ENCODE measurements at regions of chr1 and their contacts with region 1.

Region 1: DNA sequence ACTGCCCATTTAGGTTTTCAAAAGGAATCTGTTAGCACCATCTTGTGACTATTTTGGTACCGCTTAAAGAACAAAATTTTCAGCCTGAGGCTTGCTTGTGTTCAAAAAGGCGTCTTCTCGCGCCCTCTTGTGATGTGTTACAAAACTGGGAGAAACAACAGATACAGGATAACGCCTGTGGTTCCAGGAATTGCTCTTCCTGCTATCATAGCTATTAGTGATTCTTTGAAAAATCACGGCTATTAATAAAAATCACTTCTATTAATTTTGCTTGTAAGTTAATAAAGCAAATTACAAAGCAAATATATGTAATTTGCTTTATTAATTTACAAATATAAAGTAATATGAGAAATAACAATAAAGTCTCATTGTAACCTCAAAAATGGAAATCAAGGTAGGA is 82.2 kb upstream of the ABCD3 start:
- DNase-seq: peak; percentile 91
- H3K4me3 ChIP-seq: no peak overlapping the region
- H3K27ac ChIP-seq: no peak overlapping the region
- H3K4me1 ChIP-seq: no peaks in the 10 kb centered on the region
- H3K27me3 ChIP-seq: no peaks in the 10 kb centered on the region
- CTCF ChIP-seq: peak; percentile 96

Region 2: DNA sequence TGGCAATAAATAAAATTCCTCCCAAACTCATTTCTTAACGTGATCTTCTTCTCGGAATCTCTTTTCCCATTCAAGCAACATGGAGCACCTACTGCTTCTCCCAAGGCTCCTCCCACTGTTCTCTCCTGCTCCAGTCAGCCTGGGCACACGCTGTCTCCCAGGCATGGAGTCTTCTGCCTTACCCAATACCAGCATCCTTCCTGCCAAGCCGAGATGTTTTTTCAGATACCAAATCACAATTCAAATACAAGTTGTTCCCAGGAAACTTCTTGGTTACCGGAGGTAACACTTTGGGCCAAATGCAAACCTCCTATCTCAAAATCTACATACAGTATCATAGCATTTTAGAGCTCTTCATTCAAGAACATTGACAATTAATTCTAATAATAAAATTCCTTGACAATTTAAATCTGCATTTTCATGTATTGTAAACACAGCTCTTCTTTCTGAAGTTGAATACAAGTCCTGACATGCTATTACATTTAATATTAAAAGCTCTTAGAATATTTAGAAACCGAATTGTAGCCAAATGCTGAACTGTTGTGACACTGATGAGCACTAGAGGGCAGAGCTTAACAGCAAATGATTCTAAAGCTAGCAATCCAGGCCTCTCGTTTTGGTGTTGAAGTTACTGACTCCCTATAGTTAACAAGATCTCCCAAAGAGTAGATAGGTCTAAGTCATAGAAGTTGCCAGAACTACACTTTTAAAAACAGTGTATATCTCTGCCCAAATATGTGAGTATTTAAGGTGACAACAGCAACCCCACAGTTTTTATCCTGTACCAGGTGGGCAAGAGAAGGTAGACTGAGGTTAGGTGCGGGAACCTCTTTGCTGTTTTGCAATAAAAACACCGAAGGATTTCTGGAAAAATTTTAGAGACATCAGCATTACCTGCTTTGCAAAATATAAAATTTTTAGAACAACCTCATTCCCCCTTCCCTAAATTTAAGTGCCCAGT is 706.6 kb before region 1 on chr1:
- CTCF ChIA-PET with region 1: interaction called, 7 read pairs
- POLR2A ChIA-PET with region 1: no interaction called
- intact Hi-C with region 1: loop called (anchors 10 kb)
- DNase-seq: peak; percentile 76
- H3K4me3 ChIP-seq: no peak overlapping the region
- H3K27ac ChIP-seq: no peak overlapping the region
- H3K4me1 ChIP-seq: no peaks in the 10 kb centered on the region
- H3K27me3 ChIP-seq: no peaks in the 10 kb centered on the region
- CTCF ChIP-seq: peak; percentile 88

Region 3: DNA sequence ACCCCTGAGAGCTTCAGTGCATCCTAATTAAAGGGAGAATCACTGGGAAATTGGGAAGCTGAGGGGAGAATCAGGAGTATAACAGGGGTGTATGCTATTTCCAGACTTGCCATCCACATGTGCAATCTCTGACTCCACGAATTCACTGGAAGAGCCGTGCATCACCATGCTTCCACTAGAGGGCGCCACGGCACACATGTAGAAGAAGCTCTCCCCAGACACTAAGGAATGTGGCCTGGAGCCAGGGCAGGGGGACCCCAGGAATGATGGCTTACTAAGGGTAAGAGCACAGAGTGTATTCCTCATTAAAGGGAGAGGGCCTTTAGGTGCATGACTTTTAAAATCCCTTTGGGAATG is 296.5 kb before region 1 on chr1:
- CTCF ChIA-PET with region 1: interaction called, 74 read pairs
- POLR2A ChIA-PET with region 1: no interaction called
- intact Hi-C with region 1: no loop called
- DNase-seq: peak; percentile 84
- H3K4me3 ChIP-seq: no peak overlapping the region
- H3K27ac ChIP-seq: no peak overlapping the region
- H3K4me1 ChIP-seq: no peaks in the 10 kb centered on the region
- H3K27me3 ChIP-seq: no peaks in the 10 kb centered on the region
- CTCF ChIP-seq: peak; percentile 97

Region 4: DNA sequence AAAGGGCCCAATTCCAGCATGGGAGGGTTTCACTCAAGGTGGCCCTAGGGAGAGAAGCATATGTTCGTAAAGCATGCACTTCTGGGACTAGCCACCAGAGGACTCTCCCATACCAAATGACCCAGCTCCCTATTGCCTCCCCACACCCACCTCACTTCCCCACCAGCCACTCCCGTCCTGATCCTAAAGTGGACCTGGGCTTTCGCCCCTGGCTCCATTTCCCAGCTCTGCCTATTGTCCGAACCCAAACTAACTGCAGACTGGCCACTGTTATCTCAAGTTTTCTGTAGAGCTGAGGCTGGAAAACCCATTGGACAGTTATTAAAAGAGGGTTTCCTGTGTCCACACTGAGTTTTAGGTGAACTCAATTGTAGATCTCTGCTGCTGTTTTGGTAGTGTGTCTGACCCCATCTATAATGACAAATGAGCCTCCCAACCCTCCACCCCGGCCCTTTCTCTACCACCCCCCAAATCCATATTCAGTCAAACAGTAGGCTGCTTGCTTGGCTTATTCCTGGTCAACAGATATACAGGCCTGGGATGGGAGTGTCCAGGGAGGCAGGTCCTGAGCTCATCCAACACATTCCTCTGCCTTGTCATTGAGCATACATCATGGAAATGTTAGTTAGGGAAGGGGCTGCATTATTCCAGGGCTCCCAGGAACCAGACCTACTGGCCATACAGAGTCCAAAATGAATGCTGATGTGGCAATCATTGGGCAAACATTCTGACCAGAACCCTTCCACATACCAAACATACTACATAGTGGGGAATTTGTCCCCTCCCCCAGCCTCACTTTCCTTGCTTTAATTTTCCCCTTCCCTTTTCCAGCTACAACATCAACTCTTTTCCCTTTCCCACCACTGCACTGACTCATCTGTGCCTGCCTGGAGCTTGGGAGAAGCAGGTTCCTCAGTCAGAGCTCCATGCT is 274.2 kb before region 1 on chr1:
- CTCF ChIA-PET with region 1: interaction called, 54 read pairs
- POLR2A ChIA-PET with region 1: no interaction called
- intact Hi-C with region 1: loop called (anchors 2 kb)
- DNase-seq: peak; percentile 78
- H3K4me3 ChIP-seq: no peak overlapping the region
- H3K27ac ChIP-seq: no peak overlapping the region
- H3K4me1 ChIP-seq: no peaks in the 10 kb centered on the region
- H3K27me3 ChIP-seq: no peaks in the 10 kb centered on the region
- CTCF ChIP-seq: peak; percentile 85

Region 5: DNA sequence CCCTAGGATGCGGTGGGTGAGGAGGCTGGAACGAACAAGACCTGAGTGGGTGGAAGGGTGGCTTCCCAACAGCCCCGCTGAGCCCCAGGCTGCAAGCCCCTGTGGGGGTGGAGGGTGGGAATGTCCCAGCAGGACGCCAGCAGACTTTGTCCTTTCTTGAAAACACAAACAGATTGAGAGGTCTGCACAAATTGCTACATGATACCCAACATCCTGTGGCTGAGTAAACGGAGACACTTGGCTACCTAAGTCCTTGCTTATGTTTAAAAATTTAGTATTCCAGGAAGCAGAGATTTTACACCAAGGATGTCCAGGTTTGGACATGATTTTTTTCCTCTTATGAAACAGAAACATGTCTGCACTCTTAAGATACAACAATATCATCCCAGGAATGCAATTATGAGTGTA is 217.4 kb after region 1 on chr1:
- CTCF ChIA-PET with region 1: no interaction called
- POLR2A ChIA-PET with region 1: no interaction called
- intact Hi-C with region 1: no loop called
- DNase-seq: no peak
- H3K4me3 ChIP-seq: no peak overlapping the region
- H3K27ac ChIP-seq: no peak overlapping the region
- H3K4me1 ChIP-seq: peaks cover 4% of the 10 kb centered on the region
- H3K27me3 ChIP-seq: no peaks in the 10 kb centered on the region
- CTCF ChIP-seq: no peak

Region 6: DNA sequence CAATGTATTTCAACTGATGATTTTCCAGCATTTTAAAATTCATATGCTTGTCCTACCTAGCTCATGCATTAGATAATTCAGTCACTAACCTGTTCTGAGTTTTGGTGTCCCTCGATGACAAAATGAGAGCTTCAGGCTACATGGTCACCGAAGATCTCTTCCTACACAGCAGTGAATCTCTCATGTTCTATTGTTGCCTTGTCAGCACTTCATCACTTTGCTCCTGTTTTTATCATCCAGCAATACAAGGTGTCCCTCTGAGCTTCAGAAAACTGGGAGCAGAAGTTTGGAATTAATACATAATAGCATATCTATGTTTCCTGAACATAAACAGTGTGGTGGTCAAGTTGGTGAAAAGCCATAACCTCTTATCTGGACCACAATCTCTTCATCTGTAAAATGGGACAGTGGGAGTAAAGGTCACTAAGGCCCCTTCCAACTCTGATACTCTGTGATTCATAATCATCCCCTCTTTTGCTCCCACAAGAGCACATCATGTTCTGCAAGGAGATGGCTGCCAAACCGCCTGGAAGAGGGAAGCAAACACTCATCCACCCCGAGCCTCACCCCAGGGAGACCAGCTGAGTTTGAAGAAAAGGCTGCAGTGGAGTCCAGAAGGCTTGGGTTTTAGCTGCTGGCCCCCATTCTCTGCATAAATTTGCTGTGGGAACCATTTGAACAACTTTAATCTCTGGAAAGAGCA is 343.5 kb after region 1 on chr1:
- CTCF ChIA-PET with region 1: no interaction called
- POLR2A ChIA-PET with region 1: no interaction called
- intact Hi-C with region 1: no loop called
- DNase-seq: no peak
- H3K4me3 ChIP-seq: no peak overlapping the region
- H3K27ac ChIP-seq: no peak overlapping the region
- H3K4me1 ChIP-seq: no peaks in the 10 kb centered on the region
- H3K27me3 ChIP-seq: no peaks in the 10 kb centered on the region
- CTCF ChIP-seq: no peak

Region 7: GRCh38 chr1:94805912-94806311 is 470.0 kb after region 1 on chr1:
- CTCF ChIA-PET with region 1: interaction called, 4 read pairs
- POLR2A ChIA-PET with region 1: no interaction called
- intact Hi-C with region 1: loop called (anchors 5 kb)
- DNase-seq: peak; percentile 70
- H3K4me3 ChIP-seq: no peak overlapping the region
- H3K27ac ChIP-seq: no peak overlapping the region
- H3K4me1 ChIP-seq: peaks cover 14% of the 10 kb centered on the region
- H3K27me3 ChIP-seq: no peaks in the 10 kb centered on the region
- CTCF ChIP-seq: peak; percentile 93

Measured in A673 (cell line).